Psoas muscle (tissue), 8 donors: ENCODE measurements at regions of chrX and their contacts with region 1.

Region 1: GRCh38 chrX:130170752-130171445 is 863 bp upstream of the RAB33A start:
- DNase-seq: peak in 1 of 2 donors; percentile 37
- ATAC-seq: peak; percentile 25 to 58 (median 42)
- H3K4me3 ChIP-seq: peak overlapping the region; percentile 64
- H3K27ac ChIP-seq: no peak overlapping the region
- H3K4me1 ChIP-seq: no peaks in the 10 kb centered on the region
- H3K27me3 ChIP-seq: peaks cover 0 to 4% (median 0%) of the 10 kb centered on the region in 3 donors
- CTCF ChIP-seq: no peak

Region 2: GRCh38 chrX:130097507-130098209 is 73.2 kb before region 1 on chrX:
- intact Hi-C with region 1: loop called in 1 of 2 experiments (anchors 5 kb)
- DNase-seq: peak in 1 of 2 donors; percentile 38
- ATAC-seq: no peak
- H3K4me3 ChIP-seq: no peak overlapping the region
- H3K27ac ChIP-seq: no peak overlapping the region
- H3K4me1 ChIP-seq: no peaks in the 10 kb centered on the region
- H3K27me3 ChIP-seq: peaks cover 0 to 3% (median 0%) of the 10 kb centered on the region in 3 donors
- CTCF ChIP-seq: no peak

Region 3: GRCh38 chrX:130502023-130502570 is 331.2 kb after region 1 on chrX:
- intact Hi-C with region 1: no loop called
- DNase-seq: no peak
- ATAC-seq: no peak
- H3K4me3 ChIP-seq: no peak overlapping the region
- H3K27ac ChIP-seq: no peak overlapping the region
- H3K4me1 ChIP-seq: no peaks in the 10 kb centered on the region
- H3K27me3 ChIP-seq: peaks cover 0 to 10% (median 0%) of the 10 kb centered on the region in 3 donors
- CTCF ChIP-seq: no peak